ENCODE measurements at regions of chrX and their contacts with region 1.

Region 1: DNA sequence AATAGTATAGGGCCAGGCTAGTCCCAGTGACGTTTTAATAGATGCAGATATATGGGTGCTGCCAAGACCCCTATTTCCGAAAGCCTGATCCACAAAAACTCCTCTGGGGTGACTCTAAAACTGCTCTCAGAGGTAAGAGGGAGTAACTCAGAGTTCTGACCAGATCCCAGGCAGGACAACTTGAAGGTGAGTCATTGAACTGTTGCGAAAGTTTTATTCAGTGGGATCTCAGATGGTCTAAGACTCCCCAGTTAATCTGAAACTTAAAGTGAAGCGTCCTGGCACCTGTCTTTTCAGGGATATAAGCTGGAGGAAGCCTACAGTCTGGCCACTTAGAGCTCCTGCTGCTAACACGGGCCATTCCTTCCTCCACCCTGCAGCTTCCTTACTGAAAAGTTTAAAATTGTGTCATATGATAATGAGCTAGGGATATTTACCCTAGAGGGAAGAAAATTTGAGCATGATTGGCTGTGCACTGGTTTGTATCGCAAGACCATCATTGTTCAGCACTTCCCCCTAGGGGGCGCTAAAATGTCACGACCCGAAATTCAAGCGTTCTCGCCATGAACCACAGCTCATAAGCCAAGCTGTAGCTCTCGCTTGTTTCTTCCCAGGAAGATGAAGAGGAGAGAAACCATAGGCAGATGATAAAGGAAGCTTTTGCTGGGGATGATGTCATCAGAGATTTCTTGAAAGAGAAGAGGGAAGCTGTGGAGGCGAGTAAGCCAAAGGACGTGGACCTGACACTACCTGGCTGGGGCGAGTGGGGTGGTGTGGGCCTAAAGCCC is 19.5 kb downstream of the UTP14A start:
- DNase-seq: no peak
- ATAC-seq: peak; percentile 93
- H3K4me3 ChIP-seq: no peak overlapping the region
- H3K27ac ChIP-seq: no peak overlapping the region
- H3K4me1 ChIP-seq: no peaks in the 10 kb centered on the region
- H3K27me3 ChIP-seq: no peaks in the 10 kb centered on the region
- CTCF ChIP-seq: peak; percentile 57 to 73 (median 73); a peak in 5 of 6 replicates
- EP300 ChIP-seq: no peak
- POLR2A ChIP-seq: no peak
- RAD21 ChIP-seq: peak; percentile 70

Region 2: GRCh38 chrX:129905787-129906580 is 19.5 kb before region 1 on chrX and contains the start of gene UTP14A:
- CTCF ChIA-PET with region 1: interaction called, 12 read pairs
- POLR2A ChIA-PET with region 1: interaction called, 9 read pairs
- RAD21 ChIA-PET with region 1: no interaction called
- SMC1A ChIA-PET with region 1: interaction called, 5 read pairs
- in situ Hi-C with region 1: no loop called
- intact Hi-C with region 1: no loop called
- DNase-seq: peak; percentile 68
- ATAC-seq: peak; percentile 98
- H3K4me3 ChIP-seq: peak within 1 kb of the TSS; percentile 84
- H3K27ac ChIP-seq: peak within 1 kb of the TSS; percentile 35; the same call in 1 of the 2 replicates
- H3K4me1 ChIP-seq: no peaks in the 10 kb centered on the region; the same call in 1 of the 2 replicates
- H3K27me3 ChIP-seq: no peaks in the 10 kb centered on the region
- CTCF ChIP-seq: no peak
- EP300 ChIP-seq: no peak
- POLR2A ChIP-seq: peak; percentile 76
- RAD21 ChIP-seq: no peak
- polyA plus RNA-seq, gene UTP14A: 16.9 to 25.4 TPM

Region 3: DNA sequence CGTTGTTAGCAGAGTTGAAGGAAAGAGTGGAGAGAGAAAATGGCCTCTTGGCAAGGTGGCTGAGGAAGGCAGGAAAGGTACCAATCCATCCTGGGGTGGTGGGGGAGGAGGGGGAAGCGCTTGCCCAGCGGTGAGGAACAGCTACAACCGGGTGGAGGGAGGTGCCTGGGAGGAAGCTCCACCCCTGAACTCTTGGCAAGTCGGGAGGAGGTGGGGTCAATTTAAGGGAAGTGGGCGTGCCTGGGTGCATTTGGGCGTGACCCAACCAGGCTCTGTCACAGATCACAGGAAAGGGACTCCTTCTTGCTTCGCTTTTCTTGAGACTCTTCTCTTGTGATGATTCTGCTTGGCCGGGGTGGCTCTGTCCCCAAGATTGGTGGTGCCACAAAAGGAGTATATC is 98.6 kb after region 1 on chrX:
- CTCF ChIA-PET with region 1: interaction called, 163 read pairs
- POLR2A ChIA-PET with region 1: interaction called, 4 read pairs
- RAD21 ChIA-PET with region 1: interaction called, 42 read pairs
- SMC1A ChIA-PET with region 1: interaction called, 71 read pairs
- in situ Hi-C with region 1: no loop called
- intact Hi-C with region 1: loop called (anchors 1 kb)
- DNase-seq: peak; percentile 65
- ATAC-seq: peak; percentile 100
- H3K4me3 ChIP-seq: peak overlapping the region; percentile 43; the same call in 1 of the 2 replicates
- H3K27ac ChIP-seq: peak overlapping the region; percentile 20; the same call in 1 of the 2 replicates
- H3K4me1 ChIP-seq: no peaks in the 10 kb centered on the region
- H3K27me3 ChIP-seq: no peaks in the 10 kb centered on the region
- CTCF ChIP-seq: no peak
- EP300 ChIP-seq: no peak
- POLR2A ChIP-seq: no peak
- RAD21 ChIP-seq: no peak

Region 4: DNA sequence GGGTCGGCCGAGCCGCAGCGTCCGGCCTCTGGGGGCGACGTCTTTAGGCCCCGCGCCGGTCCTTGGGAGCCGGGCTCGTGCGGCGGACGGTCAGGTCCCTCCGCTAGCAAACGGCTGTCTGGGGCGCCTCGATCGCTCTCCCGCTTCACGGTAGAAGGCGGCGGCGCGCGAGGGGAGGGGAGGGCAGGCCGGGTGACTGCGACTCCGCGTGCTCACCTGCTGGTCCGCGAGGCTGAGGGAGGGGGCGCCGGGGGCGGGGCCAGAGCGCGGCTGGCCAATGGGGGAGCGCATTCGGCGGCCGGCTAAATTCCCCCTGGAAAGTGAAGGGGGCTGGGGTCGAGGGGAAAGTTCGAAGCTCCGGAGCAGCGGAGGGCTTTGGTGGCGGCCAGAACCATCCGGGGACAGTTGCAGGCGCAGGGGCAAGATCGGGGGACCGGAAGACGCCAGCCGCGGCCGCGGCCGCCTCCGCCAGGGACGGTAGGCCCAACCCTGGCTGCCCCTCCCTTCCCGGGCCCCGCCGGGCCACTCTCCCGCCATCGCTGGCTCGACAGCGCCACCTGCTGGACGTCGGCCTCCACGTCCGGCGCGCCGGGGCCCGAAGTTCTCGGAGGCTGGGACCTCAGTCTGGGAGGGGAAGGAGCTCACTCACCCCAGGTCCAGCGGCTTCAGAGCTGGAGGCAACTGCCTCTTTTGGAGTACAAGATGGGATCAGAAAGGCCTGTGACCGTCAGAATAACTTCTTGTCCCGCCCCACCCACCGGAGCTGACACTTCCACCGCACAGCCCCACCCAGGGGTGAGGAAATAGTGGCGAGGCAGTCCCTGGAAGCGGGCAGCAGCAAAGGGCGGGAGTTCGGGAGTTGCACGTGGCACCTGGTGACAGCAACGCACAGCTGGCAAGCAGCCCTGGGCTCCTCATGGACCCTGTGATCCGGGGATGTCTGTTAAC is 134.9 kb after region 1 on chrX:
- CTCF ChIA-PET with region 1: interaction called, 42 read pairs
- POLR2A ChIA-PET with region 1: no interaction called
- RAD21 ChIA-PET with region 1: interaction called, 22 read pairs
- SMC1A ChIA-PET with region 1: interaction called, 23 read pairs
- in situ Hi-C with region 1: loop called (anchors 5 kb)
- intact Hi-C with region 1: loop called (anchors 1 kb)
- DNase-seq: no peak
- ATAC-seq: peak; percentile 98
- H3K4me3 ChIP-seq: peak overlapping the region; percentile 36; the same call in 1 of the 2 replicates
- H3K27ac ChIP-seq: no peak overlapping the region
- H3K4me1 ChIP-seq: peaks cover 3% of the 10 kb centered on the region; the same call in 1 of the 2 replicates
- H3K27me3 ChIP-seq: no peaks in the 10 kb centered on the region
- CTCF ChIP-seq: peak; percentile 66 to 90 (median 76)
- EP300 ChIP-seq: no peak
- POLR2A ChIP-seq: peak; percentile 66
- RAD21 ChIP-seq: peak; percentile 79

Region 5: DNA sequence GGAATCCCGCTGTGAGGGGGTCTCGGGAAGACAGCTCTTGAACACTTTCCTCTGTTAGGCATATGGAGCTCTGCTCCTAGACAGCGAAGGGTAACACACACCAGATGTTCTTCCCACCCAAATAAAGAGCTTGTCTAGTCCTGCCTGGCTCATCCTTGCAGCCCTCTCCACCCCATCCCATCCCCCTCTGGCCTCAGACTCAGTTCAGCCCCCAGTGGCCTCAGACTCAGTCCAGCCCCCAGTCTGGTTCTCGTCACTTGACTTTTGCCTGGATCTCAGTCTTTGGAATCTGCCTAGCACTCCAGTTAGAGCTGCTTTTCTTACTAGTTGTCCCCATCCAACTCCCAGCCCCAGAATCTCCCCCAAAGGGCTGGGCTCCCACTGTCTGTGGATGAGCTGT is 261.2 kb after region 1 on chrX:
- CTCF ChIA-PET with region 1: interaction called, 5 read pairs
- POLR2A ChIA-PET with region 1: no interaction called
- RAD21 ChIA-PET with region 1: no interaction called
- SMC1A ChIA-PET with region 1: no interaction called
- in situ Hi-C with region 1: no loop called
- intact Hi-C with region 1: loop called (anchors 5 kb)
- DNase-seq: no peak
- ATAC-seq: no peak
- H3K4me3 ChIP-seq: no peak overlapping the region
- H3K27ac ChIP-seq: no peak overlapping the region
- H3K4me1 ChIP-seq: peaks cover 7% of the 10 kb centered on the region
- H3K27me3 ChIP-seq: no peaks in the 10 kb centered on the region
- CTCF ChIP-seq: no peak
- EP300 ChIP-seq: no peak
- POLR2A ChIP-seq: no peak
- RAD21 ChIP-seq: no peak

Measured in GM12878 (cell line).